Mammary epithelial cell (primary cell): ENCODE measurements at regions of chr5 and their contacts with region 1.

Region 1: GRCh38 chr5:126499853-126500342 is 76.7 kb downstream of the GRAMD2B start:
- DNase-seq: no peak
- H3K4me3 ChIP-seq: no peak overlapping the region
- H3K27ac ChIP-seq: no peak overlapping the region
- H3K4me1 ChIP-seq: peaks cover 8% of the 10 kb centered on the region
- H3K27me3 ChIP-seq: no peaks in the 10 kb centered on the region
- CTCF ChIP-seq: peak; percentile 46 to 66

Region 2: DNA sequence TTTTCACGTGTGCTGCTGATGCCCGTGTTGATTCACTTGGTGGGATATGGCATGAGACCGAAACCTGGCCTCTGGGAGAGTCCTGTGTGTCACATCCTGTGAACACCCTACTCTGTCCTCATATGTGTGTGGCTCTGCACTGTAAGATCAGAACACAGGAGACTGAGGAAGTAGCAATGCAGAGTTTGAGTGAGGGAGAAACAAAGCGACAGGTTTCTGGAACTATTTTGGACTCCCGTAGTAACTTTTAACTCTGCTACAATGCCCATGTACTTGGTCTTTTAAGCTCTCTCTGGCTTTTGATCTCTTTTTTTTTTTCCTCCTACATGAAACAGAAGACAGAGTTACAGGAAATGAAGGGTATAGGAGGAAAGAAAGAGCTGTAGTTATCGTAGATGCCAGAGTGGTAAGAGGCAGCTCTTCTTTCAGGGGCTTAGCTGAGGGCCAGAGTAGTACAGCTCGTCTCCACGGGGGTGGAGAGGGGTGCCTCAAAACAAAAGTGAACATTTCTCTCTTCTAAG is 50.1 kb before region 1 on chr5:
- CTCF ChIA-PET with region 1: no interaction called
- dilution Hi-C with region 1: no loop called
- in situ Hi-C with region 1: no loop called
- intact Hi-C with region 1: no loop called
- DNase-seq: peak; percentile 98
- H3K4me3 ChIP-seq: peak overlapping the region in 2 of 3 experiments; percentile 8 to 12
- H3K27ac ChIP-seq: peak overlapping the region; percentile 99
- H3K4me1 ChIP-seq: peaks cover 68% of the 10 kb centered on the region
- H3K27me3 ChIP-seq: no peaks in the 10 kb centered on the region
- CTCF ChIP-seq: no peak

Region 3: DNA sequence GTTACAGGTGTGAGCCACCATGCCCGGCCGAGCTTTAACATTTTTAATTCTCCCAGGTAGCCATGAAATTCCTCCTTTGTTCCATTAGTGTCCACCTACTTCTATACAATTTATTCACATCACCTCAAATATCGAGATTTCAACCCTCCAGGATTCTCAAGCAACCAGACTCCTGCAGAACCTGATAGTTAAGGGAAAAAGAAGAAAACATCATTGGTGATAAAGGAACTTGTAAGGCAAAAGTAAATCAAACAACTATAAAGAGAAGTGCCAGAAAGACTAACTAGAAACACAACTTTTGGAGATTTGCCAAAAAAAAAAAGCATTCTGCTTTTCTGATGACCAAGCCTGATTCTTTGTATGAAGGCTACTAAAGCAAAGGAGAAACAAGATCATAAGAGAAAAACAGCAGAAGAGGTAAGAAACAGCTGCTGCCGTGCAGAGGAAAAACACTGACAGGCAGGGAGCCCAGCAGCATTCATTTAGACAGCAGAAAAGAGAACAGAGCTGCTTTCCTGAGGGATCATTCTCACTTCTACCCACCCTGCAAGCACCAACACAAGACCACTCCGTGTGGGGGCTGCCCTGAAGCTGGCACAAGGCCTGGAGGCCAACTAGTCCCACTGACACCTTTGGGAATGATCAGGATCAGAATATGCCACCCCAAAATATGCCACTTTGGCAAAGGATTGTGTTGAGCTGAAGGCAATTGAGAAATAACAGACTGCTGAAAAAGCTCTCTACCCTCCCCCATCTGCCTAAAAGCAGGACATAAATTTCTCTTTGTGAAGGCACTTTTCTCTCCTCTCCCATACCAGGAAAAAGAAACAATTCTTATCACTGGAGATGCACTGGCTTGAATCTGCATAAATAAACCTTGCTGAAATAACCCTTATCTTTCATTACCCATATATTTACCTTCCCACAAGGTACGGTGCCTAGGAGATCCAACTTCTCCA is 20.0 kb after region 1 on chr5:
- CTCF ChIA-PET with region 1: no interaction called
- dilution Hi-C with region 1: no loop called
- in situ Hi-C with region 1: no loop called
- intact Hi-C with region 1: loop called (anchors 2 kb)
- DNase-seq: peak; percentile 37
- H3K4me3 ChIP-seq: no peak overlapping the region
- H3K27ac ChIP-seq: peak overlapping the region; percentile 54
- H3K4me1 ChIP-seq: peaks cover 47% of the 10 kb centered on the region
- H3K27me3 ChIP-seq: no peaks in the 10 kb centered on the region
- CTCF ChIP-seq: no peak